Spleen (tissue), 13 donors: ENCODE measurements at regions of chr7 and their contacts with region 1.

Region 1: GRCh38 chr7:130777426-130777825 is 43.4 kb upstream of the KLF14 start:
- DNase-seq: no peak
- H3K4me3 ChIP-seq: no peak overlapping the region
- H3K27ac ChIP-seq: no peak overlapping the region
- H3K4me1 ChIP-seq: no peaks in the 10 kb centered on the region
- H3K27me3 ChIP-seq: no peaks in the 10 kb centered on the region
- CTCF ChIP-seq: no peak
- POLR2A ChIP-seq: no peak

Region 2: DNA sequence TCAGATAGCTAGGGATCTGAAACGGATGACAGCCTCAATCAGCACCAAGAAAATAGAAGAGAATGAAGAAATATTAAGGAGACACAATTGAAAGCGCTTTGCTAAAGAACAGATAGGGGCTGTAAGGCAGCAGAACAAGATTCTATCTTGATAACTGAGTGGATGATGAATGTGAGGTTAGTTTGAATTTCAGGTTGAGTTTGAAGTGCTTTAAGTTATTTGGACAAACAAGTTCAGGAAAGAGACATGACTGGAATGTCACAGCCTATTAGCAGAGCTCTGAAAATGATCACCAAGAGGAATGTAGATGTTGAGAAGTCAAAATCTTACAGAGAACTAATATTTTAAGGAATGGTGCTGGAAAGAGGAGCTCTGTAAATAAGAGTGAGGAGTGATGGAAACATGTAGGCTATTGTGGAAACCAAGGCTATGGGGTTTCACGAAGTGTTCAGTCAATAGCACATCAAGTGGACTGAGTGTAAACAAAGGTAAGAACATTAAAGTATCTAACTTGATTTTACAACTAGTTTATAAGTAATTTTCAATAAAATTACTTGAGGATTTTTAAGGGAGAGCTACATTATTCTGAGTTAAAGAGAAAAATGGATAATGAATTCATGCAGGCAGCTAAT is 223.9 kb before region 1 on chr7:
- intact Hi-C with region 1: no loop called
- DNase-seq: no peak
- H3K4me3 ChIP-seq: no peak overlapping the region
- H3K27ac ChIP-seq: no peak overlapping the region
- H3K4me1 ChIP-seq: no peaks in the 10 kb centered on the region
- H3K27me3 ChIP-seq: no peaks in the 10 kb centered on the region
- CTCF ChIP-seq: no peak
- POLR2A ChIP-seq: no peak

Region 3: DNA sequence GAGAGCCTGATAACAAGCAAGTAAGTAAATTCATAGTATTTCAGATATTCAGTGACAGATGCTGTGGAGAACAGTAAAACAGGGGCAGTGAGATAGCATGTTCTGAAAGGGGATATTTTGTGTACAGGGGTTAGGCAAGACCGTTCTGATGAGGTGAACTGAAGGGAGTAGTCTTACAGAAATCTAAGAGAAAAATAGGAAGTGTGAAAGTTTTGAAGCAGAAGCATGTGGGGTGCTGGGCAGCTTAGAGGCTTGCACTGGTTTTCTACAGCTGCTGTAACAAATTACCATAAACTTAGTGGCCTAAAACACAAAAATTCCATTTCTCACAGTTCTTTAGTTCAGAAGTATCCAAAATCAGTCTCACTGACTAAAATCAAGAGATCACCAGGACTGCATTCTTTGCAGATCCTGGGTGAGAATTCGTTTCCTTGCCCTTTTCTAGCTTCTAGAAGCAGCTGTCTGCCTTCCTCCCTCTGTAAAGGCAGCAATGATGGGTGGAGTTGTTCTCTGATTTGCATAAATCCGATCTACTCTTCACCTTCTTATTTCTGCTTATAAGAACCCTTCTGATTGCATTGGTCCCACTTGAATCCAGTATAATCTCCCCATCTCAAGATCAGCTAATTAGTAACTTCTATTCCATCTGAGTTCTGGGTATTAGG is 36.0 kb before region 1 on chr7:
- intact Hi-C with region 1: no loop called
- DNase-seq: no peak
- H3K4me3 ChIP-seq: no peak overlapping the region
- H3K27ac ChIP-seq: peak overlapping the region in 6 of 8 donors; percentile 47 to 90 (median 82)
- H3K4me1 ChIP-seq: peaks cover 0 to 23% (median 14%) of the 10 kb centered on the region in 6 donors
- H3K27me3 ChIP-seq: peaks cover 0 to 97% (median 30%) of the 10 kb centered on the region in 7 donors
- CTCF ChIP-seq: no peak
- POLR2A ChIP-seq: no peak

Region 4: DNA sequence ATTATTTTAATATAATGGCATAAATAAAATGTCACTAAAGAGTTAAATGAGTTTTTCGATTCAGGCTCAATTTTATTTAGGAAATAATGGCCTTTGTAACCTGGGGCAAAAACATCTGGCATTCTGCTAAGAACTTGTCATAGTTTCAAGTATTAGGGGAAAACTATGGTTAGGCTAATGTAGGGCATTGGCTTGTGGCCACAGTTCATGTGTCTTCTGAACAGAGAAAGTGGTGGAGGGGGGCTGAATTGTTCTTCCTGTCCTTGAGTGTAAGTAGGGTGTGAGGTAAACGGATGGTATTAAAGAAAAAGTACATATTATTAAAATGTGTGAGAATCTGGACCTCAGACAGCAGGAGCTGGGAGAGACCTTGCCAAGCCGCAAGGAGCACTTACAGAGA is 25.7 kb after region 1 on chr7:
- intact Hi-C with region 1: loop called (anchors 2 kb)
- DNase-seq: no peak
- H3K4me3 ChIP-seq: no peak overlapping the region
- H3K27ac ChIP-seq: no peak overlapping the region
- H3K4me1 ChIP-seq: peaks cover 0 to 13% (median 0%) of the 10 kb centered on the region in 6 donors
- H3K27me3 ChIP-seq: peaks cover 0 to 23% (median 0%) of the 10 kb centered on the region in 7 donors
- CTCF ChIP-seq: no peak
- POLR2A ChIP-seq: no peak